CD4-positive, alpha-beta T cell (primary cell): ENCODE measurements at regions of chr1 and their contacts with region 1.

Region 1: DNA sequence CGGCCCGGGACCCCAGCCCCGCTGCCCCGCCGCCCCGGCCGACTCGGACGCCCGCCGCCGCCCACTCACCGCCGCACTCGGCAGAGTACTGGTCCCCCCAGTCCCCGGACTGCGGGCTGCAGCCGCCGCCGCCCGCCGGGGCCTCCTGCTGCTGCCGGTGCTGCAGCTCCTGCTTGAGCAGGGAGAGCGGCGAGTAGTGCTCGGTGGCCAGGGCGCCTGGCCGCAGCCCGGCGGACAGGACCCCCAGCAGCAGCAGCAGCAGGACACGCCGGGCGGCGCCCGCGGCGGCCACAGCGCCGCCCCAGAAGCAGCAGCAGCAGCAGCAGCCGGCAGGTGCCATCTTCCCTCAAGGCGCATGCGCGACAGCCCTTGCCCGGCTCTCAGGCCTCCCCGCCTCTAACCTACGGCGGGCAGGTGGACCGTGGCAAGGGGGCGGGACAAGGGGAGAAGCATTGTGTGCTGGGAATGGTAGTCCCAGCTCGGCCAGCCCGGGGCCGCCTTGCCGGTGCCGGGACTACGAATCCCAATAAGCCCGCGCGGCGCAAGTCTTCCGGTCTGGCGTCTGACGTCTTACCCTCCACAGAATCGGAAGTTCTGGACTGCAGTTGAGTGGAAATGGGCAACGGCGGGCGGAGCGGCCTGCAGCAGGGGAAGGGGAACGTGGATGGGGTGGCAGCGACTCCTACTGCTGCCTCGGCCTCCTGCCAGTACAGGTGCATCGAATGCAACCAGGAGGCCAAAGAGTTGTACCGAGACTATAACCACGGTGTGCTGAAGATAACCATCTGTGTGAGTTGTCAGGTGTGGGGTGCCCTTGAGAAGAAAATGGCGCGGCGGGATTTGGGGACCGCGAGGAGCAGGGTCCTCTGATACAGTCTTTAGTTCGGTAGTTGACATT is at the starts of genes ARV1 and TTC13:
- DNase-seq: peak; percentile 89 to 99 (median 96)
- ATAC-seq: peak; percentile 89
- H3K4me3 ChIP-seq: peak within 1 kb of the TSS; percentile 84
- H3K4me3 Mint-ChIP-seq: peak within 1 kb of the TSS; percentile 99
- H3K27ac ChIP-seq: peak within 1 kb of the TSS; percentile 76 to 78
- H3K27ac Mint-ChIP-seq: peak within 1 kb of the TSS; percentile 94
- H3K4me1 ChIP-seq: peaks cover 50% of the 10 kb centered on the region
- H3K4me1 Mint-ChIP-seq: peaks cover 35% of the 10 kb centered on the region
- H3K27me3 ChIP-seq: no peaks in the 10 kb centered on the region
- H3K27me3 Mint-ChIP-seq: no peaks in the 10 kb centered on the region
- CTCF ChIP-seq: peak; percentile 71
- total RNA-seq, gene ARV1: 1.5 to 1.8 TPM
- total RNA-seq, gene TTC13: 24.9 to 25.0 TPM

Region 2: GRCh38 chr1:230867903-230868735 is 110.6 kb before region 1 on chr1 and contains the start of gene C1orf198:
- CTCF ChIA-PET with region 1: no interaction called
- POLR2A ChIA-PET with region 1: interaction called, 4 read pairs
- intact Hi-C with region 1: loop called in 1 of 2 experiments (anchors 2 kb)
- DNase-seq: peak; percentile 57 to 86 (median 72)
- ATAC-seq: peak; percentile 92
- H3K4me3 ChIP-seq: peak within 1 kb of the TSS; percentile 64
- H3K4me3 Mint-ChIP-seq: peak within 1 kb of the TSS; percentile 93
- H3K27ac ChIP-seq: no peak within 1 kb of the TSS
- H3K27ac Mint-ChIP-seq: no peak within 1 kb of the TSS
- H3K4me1 ChIP-seq: peaks cover 20% of the 10 kb centered on the region
- H3K4me1 Mint-ChIP-seq: peaks cover 19% of the 10 kb centered on the region
- H3K27me3 ChIP-seq: peaks cover 17 to 21% of the 10 kb centered on the region in 2 experiments
- H3K27me3 Mint-ChIP-seq: peaks cover 20% of the 10 kb centered on the region
- CTCF ChIP-seq: no peak
- total RNA-seq, gene C1orf198: 2.2 TPM

Region 3: DNA sequence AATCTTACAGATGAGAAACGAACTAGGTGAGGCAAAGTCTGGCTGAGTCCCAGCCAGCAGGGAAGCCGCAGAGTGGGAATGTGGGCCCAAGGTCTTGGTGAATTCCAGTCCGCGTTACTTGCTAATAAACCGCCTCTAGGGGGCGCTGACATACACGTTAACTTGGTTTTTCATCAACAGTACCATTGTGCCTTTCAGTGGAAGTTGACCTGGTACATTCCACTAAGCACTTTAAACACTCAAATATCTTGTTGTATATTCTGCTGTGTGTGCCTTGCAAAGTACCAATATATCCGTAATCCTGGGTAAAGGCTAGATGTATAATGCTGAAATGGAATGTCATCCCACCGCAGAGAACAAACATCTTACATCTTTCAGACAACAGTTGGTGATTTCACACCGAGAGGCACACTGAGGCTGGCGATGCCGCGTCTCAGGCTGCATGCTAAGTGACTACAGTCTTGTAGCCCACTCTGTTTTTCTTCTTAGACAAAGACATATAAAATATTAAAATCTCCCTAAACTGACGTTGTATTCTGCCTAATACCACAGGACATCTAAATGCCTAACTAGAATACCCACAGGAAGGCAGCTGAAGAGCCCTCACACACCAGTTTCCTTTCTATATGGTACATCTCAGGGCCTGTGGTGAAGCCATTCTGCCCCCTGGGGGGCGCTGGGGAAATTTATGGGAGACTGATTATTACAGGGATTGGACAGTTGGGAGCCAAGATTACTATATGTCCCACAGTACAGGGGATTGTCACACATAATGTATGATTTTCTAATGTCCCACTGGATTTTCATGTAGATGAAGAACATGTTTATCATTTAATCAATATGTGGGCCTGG is 61.2 kb before region 1 on chr1:
- CTCF ChIA-PET with region 1: interaction called, 7 read pairs
- POLR2A ChIA-PET with region 1: interaction called, 6 read pairs
- intact Hi-C with region 1: loop called (anchors 1 to 2 kb)
- DNase-seq: peak; percentile 51 to 90 (median 70)
- ATAC-seq: peak; percentile 73
- H3K4me3 ChIP-seq: no peak overlapping the region
- H3K4me3 Mint-ChIP-seq: no peak overlapping the region
- H3K27ac ChIP-seq: no peak overlapping the region
- H3K27ac Mint-ChIP-seq: peak overlapping the region; percentile 44
- H3K4me1 ChIP-seq: no peaks in the 10 kb centered on the region
- H3K4me1 Mint-ChIP-seq: no peaks in the 10 kb centered on the region
- H3K27me3 ChIP-seq: no peaks in the 10 kb centered on the region
- H3K27me3 Mint-ChIP-seq: no peaks in the 10 kb centered on the region
- CTCF ChIP-seq: peak; percentile 87

Region 4: DNA sequence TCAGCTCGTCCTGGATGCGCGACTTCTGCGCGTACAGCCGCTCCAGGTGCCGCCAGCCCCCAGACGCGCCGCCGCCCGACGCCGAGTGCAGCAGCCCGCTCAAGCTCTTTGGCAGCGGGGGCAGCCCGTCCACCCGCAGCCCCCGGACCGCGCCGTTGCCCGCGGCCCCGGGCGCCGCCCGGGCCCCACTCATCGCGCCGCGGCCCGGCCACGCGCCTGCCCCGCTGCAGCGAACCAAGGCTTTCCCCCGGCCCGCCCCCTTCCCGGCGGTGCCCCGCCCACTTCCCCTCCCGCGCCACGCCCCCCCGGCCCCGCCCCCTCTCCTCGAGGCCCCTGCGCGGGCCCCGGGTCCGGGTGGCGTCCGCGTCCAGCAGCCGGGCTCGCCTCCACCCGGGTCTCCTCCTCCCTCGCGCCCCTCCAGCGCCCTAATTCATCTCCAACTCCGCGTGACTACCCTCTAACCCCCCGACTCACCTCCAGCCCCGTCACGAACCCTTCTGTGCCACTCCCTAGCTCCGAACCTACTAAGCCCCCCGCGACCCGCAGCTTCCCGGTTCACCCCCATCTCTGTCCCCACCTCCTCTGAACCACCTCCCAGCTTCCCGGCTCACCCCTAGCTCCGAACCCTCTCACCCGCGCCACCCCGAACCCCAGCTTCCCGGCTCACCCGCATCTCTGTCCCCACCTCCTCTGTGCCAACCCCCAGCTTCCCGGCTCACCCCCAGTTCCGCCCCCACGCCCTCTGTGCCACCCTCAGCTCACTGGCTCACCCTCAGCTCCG is 61.5 kb after region 1 on chr1 and contains the start of gene FAM89A:
- CTCF ChIA-PET with region 1: interaction called, 6 read pairs
- POLR2A ChIA-PET with region 1: interaction called, 28 read pairs
- intact Hi-C with region 1: loop called (anchors 2 kb)
- DNase-seq: peak; percentile 55 to 86 (median 70)
- ATAC-seq: peak; percentile 72
- H3K4me3 ChIP-seq: peak within 1 kb of the TSS; percentile 78
- H3K4me3 Mint-ChIP-seq: peak within 1 kb of the TSS; percentile 91
- H3K27ac ChIP-seq: peak within 1 kb of the TSS in 1 of 2 donors; percentile 3
- H3K27ac Mint-ChIP-seq: peak within 1 kb of the TSS; percentile 58
- H3K4me1 ChIP-seq: peaks cover 24% of the 10 kb centered on the region
- H3K4me1 Mint-ChIP-seq: peaks cover 40% of the 10 kb centered on the region
- H3K27me3 ChIP-seq: no peaks in the 10 kb centered on the region
- H3K27me3 Mint-ChIP-seq: no peaks in the 10 kb centered on the region
- CTCF ChIP-seq: no peak
- total RNA-seq, gene FAM89A: 3.3 to 4.0 TPM

Region 5: GRCh38 chr1:231211005-231211857 is 232.5 kb after region 1 on chr1:
- CTCF ChIA-PET with region 1: interaction called, 3 read pairs
- POLR2A ChIA-PET with region 1: no interaction called
- intact Hi-C with region 1: loop called in 1 of 2 experiments (anchors 5 kb)
- DNase-seq: peak; percentile 77 to 93 (median 88)
- ATAC-seq: peak; percentile 96
- H3K4me3 ChIP-seq: peak overlapping the region; percentile 48
- H3K4me3 Mint-ChIP-seq: peak overlapping the region; percentile 89
- H3K27ac ChIP-seq: no peak overlapping the region
- H3K27ac Mint-ChIP-seq: peak overlapping the region; percentile 5
- H3K4me1 ChIP-seq: peaks cover 11% of the 10 kb centered on the region
- H3K4me1 Mint-ChIP-seq: peaks cover 11% of the 10 kb centered on the region
- H3K27me3 ChIP-seq: no peaks in the 10 kb centered on the region
- H3K27me3 Mint-ChIP-seq: no peaks in the 10 kb centered on the region
- CTCF ChIP-seq: peak; percentile 90

Region 6: DNA sequence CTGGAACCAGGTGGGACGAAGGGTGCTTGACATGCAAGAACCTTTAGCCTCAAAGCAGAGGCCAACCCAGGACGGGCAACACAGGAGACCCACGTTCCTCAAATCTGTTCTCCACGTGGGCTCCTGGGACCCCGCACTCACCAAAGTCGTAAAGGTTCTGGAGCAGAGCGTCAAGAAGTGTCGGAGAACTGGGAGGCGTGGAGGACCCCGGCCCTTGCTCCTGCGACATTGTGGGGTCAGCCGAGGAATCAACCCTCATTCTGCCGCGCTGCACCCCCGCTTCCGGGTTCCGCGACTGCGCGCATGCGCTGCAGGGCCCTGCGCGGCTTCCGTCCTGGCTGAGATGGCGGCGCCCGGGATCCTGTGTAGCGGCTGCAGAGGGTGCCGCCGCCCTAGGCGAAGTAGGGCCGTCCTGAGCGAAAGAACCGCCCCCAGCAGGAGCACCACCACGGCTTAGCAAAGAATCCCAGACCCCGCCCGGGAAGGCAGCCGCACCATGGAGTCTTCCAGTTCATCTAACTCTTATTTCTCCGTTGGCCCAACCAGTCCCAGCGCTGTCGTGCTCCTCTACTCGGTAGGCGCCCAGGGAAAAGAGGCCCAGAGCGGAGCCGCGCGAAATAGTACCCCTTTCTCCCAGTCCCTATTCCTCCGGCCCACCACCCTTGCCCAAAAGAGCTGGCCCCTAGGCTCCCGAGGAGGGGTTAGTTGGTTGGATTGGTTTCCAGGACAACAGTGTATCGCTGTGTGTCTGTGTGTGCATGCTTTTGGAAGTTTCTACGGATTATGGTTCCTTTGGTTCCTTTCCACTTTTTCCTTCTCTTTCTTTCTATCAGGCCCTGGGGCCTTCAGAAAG is 262.4 kb after region 1 on chr1 and contains the start of gene GNPAT:
- CTCF ChIA-PET with region 1: no interaction called
- POLR2A ChIA-PET with region 1: interaction called, 3 read pairs
- intact Hi-C with region 1: loop called in 1 of 2 experiments (anchors 2 kb)
- DNase-seq: peak; percentile 83 to 95 (median 90)
- ATAC-seq: peak; percentile 95
- H3K4me3 ChIP-seq: peak within 1 kb of the TSS; percentile 93
- H3K4me3 Mint-ChIP-seq: peak within 1 kb of the TSS; percentile 98
- H3K27ac ChIP-seq: peak within 1 kb of the TSS; percentile 67 to 77
- H3K27ac Mint-ChIP-seq: peak within 1 kb of the TSS; percentile 87
- H3K4me1 ChIP-seq: peaks cover 30% of the 10 kb centered on the region
- H3K4me1 Mint-ChIP-seq: peaks cover 83% of the 10 kb centered on the region
- H3K27me3 ChIP-seq: no peaks in the 10 kb centered on the region
- H3K27me3 Mint-ChIP-seq: no peaks in the 10 kb centered on the region
- CTCF ChIP-seq: no peak
- total RNA-seq, gene GNPAT: 11.8 to 12.8 TPM

Region 7: DNA sequence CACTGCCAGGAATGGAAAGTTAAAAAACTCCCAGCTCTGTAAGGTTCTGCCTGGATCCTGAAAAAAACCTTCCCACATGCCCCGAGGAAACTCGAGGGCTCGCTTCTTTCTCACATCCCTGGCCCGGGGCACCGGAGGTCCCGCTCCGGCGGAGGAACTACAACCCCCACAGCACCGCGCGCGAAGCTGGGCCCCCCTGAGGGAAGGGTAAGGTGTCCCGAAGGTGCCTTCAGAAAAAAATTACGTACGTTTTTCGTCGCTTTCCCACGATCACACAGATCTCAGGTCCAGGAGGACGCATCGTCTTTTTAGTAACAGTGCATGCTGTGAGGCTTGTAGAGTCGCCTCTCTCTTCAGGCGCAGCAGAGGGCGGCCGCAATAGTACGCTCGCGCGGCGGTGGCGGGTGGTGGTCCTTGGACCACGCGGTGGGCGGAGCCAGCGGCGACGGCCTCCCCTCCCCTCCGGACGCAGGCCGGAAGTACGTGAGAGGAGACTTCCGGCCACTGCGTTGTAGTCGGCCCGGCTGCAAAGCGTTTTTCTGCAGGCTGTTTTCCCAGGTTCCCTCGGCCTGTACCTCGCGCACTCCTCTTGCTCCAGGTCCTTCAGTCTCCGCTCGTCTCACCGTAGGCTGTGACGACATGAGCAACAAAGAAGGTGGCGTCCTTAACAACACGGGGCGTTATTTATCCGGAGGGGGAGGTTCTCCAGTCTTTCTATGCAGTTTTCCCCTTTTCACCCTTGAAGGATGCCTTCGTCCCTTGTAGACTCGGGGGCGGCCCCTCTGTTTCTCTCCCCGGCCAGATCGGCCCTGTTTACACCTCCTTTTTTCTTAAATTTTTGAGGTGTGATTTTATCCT is 549.7 kb after region 1 on chr1 and contains the start of gene TSNAX:
- CTCF ChIA-PET with region 1: no interaction called
- POLR2A ChIA-PET with region 1: no interaction called
- intact Hi-C with region 1: loop called in 1 of 2 experiments (anchors 5 kb)
- DNase-seq: peak; percentile 81 to 96 (median 88)
- ATAC-seq: peak; percentile 85
- H3K4me3 ChIP-seq: peak within 1 kb of the TSS; percentile 70
- H3K4me3 Mint-ChIP-seq: peak within 1 kb of the TSS; percentile 94
- H3K27ac ChIP-seq: peak within 1 kb of the TSS; percentile 84 to 89
- H3K27ac Mint-ChIP-seq: peak within 1 kb of the TSS; percentile 97
- H3K4me1 ChIP-seq: peaks cover 38% of the 10 kb centered on the region
- H3K4me1 Mint-ChIP-seq: peaks cover 46% of the 10 kb centered on the region
- H3K27me3 ChIP-seq: no peaks in the 10 kb centered on the region
- H3K27me3 Mint-ChIP-seq: no peaks in the 10 kb centered on the region
- CTCF ChIP-seq: no peak
- total RNA-seq, gene TSNAX: 33.5 to 35.7 TPM